ENCODE measurements at regions of chr9 and their contacts with region 1.

Region 1: DNA sequence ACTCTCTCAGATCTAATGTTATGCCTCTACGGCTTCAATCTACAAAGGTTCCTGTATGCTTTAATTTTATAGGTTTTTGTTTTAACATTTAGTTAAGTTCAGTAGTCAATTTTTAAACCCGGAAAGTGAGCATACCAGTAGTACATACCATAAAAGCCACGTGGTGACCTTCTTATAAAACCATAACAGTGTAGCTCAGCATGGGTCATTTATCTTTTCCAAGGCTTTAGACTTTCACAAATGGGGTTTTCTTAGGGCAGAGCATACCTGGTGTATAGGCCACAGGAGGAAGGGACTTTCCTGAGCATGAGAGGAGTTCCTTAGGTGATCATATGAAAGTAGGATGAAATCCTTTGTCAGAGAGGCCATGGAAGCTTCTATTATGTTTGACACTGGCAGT is 23.2 kb downstream of the ECM2 start:
- DNase-seq: no peak
- ATAC-seq: no peak
- H3K4me3 ChIP-seq: no peak overlapping the region
- H3K27ac ChIP-seq: no peak overlapping the region
- H3K4me1 ChIP-seq: peaks cover 0 to 34% (median 17%) of the 10 kb centered on the region in 12 donors
- H3K27me3 ChIP-seq: no peaks in the 10 kb centered on the region
- CTCF ChIP-seq: no peak
- POLR2A ChIP-seq: no peak

Region 2: DNA sequence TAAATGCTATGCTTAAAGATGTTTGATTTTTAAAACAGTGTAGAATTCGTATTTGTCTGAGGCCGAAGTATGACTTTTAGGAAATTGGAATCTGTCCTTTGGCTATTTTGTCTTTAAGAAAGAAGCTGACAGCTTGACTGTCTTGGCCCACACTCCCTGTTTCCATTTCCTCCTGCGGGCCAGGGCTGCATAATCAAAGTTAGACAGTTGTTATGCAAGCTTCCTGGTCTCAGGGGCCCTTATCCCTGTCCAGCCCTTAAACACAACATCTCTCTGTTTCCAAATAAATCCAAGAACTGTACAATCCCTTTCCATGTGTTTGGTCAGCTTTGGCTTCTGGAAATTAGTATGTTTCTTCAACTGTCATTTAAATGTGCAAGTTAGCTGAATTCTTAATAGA is 77.8 kb after region 1 on chr9:
- intact Hi-C with region 1: loop called in 1 of 10 experiments (anchors 10 kb)
- DNase-seq: peak in 4 of 5 donors; percentile 75 to 85 (median 83)
- ATAC-seq: peak; percentile 91 to 98 (median 98)
- H3K4me3 ChIP-seq: no peak overlapping the region
- H3K27ac ChIP-seq: peak overlapping the region in 10 of 12 donors; percentile 2 to 71 (median 51)
- H3K4me1 ChIP-seq: peaks cover 0 to 42% (median 28%) of the 10 kb centered on the region in 12 donors
- H3K27me3 ChIP-seq: no peaks in the 10 kb centered on the region
- CTCF ChIP-seq: no peak
- POLR2A ChIP-seq: no peak

Region 3: DNA sequence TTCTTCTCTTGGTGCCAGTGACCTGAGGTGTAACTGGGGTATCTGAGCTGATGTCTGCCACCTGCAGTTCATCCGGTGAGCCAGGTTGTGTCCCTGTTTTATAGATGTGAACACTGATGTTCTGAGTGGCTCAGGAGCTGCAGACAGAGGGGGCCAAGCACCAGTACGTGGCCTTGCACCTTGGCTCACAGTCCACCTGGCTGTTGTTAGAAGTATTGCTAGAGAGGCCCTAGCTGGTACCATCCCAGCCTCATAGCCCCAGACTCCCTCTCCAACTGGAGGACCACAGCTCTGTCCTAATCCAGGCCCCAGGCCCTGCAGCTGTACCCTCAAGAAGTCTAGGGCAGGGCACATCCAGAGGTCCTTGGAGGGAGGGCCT is 1080.0 kb after region 1 on chr9:
- intact Hi-C with region 1: no loop called
- DNase-seq: no peak
- ATAC-seq: peak in 1 of 4 donors; percentile 8
- H3K4me3 ChIP-seq: no peak overlapping the region
- H3K27ac ChIP-seq: no peak overlapping the region
- H3K4me1 ChIP-seq: peaks cover 0 to 74% (median 48%) of the 10 kb centered on the region in 12 donors
- H3K27me3 ChIP-seq: no peaks in the 10 kb centered on the region
- CTCF ChIP-seq: peak in 2 of 12 donors; percentile 9 to 13
- POLR2A ChIP-seq: no peak